GM13977 (cell line): ENCODE measurements at regions of chr11 and their contacts with region 1.

Region 1: GRCh38 chr11:78564490-78565467 is 9.9 kb downstream of the NARS2 start:
- DNase-seq: no peak
- CTCF ChIP-seq: peak; percentile 61

Region 2: DNA sequence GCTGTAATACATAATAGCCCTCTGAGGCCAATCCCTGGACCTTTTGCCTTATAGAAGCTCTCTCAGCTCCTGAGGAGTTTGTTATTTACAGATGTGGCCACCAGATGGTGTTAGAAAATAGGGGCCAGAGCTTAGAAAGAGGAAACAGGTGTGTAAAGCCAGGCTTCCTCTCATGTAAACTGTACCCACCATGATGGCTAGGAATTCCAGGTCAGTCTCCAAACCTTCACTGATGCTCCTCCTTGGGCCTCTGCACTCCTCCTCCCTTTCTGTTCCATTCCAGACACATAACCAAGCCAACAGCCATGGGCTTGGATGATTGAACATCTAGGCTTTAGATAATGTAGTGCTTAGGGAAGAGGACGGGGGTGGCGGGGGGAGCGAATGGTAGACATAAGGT is 336.3 kb before region 1 on chr11:
- in situ Hi-C with region 1: loop called (anchors 5 kb)
- DNase-seq: peak; percentile 68
- CTCF ChIP-seq: peak; percentile 66

Region 3: DNA sequence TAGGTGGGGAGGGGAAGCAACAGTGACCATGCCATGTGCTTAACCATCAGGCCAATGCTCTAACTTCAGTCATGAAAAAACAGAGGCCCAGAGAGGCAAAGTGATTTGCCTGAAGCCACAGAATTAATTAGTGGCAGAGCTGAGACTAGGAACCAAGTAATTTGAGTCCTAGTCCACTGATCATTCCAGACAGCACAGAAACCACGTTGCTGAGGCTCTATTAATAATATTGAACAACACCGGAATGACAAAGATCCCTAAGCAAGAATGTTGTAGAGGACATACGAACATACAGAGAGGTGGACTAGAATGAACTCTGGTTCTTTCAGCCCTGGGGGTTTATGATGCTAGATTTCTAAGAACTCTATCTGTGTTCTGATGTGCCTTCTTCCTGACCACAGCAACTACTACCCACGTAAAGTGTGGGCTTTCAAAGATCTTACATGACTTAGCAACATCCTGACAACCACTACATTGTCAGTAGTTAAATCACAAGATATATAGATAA is 239.5 kb before region 1 on chr11:
- in situ Hi-C with region 1: no loop called
- DNase-seq: peak; percentile 10
- CTCF ChIP-seq: no peak

Region 4: GRCh38 chr11:78926633-78927338 is 362.0 kb after region 1 on chr11:
- in situ Hi-C with region 1: no loop called
- DNase-seq: no peak
- CTCF ChIP-seq: no peak